ENCODE measurements at regions of chr9 and their contacts with region 1.

Region 1: DNA sequence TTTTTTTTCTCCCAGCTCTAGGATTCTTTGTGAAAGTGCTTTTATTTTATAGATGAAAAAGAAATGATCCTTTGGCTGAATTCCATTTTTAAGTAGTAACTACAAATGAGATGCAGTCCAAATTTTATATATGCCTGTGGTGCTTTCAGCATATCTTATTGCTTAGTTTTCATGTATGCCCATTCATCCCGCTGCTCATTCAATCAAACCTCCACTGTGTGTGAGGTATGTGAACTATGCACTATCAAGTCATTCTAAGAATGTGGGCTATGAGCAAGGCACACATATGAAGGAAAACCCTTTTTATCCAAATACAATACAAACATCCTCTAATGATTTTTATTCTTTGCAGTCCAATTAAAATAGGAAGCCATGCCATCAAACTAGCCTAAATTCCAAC is 1069.1 kb upstream of the DMAC1 start:
- DNase-seq: no peak
- H3K4me3 ChIP-seq: no peak overlapping the region
- H3K27ac ChIP-seq: no peak overlapping the region
- H3K4me1 ChIP-seq: peaks cover 0 to 13% (median 0%) of the 10 kb centered on the region in 4 donors
- H3K27me3 ChIP-seq: no peaks in the 10 kb centered on the region
- CTCF ChIP-seq: no peak
- EP300 ChIP-seq: no peak
- POLR2A ChIP-seq: no peak

Region 2: DNA sequence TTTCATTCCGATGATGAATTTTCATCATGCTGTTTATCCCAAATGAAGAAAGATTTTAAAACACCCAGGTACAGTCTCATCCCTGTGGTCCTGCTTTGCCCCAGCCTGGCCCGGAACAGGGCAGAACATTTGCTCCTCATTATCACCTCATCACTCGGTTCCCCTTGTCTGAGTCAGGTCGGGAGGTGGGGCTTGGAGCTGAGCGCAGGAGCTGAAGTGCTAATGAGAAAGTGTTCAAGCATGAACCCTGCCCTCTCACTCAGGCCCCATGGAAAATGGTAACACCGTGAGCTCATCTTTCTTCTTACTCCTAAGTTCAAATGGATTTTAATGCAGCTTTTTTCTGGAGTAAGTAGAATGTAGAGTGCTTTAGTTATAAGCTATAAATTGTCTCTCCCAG is 1644.7 kb before region 1 on chr9:
- in situ Hi-C with region 1: no loop called
- intact Hi-C with region 1: loop called (anchors 5 kb)
- DNase-seq: no peak
- H3K4me3 ChIP-seq: no peak overlapping the region
- H3K27ac ChIP-seq: no peak overlapping the region
- H3K4me1 ChIP-seq: no peaks in the 10 kb centered on the region
- H3K27me3 ChIP-seq: no peaks in the 10 kb centered on the region
- CTCF ChIP-seq: no peak
- EP300 ChIP-seq: no peak
- POLR2A ChIP-seq: no peak

Region 3: DNA sequence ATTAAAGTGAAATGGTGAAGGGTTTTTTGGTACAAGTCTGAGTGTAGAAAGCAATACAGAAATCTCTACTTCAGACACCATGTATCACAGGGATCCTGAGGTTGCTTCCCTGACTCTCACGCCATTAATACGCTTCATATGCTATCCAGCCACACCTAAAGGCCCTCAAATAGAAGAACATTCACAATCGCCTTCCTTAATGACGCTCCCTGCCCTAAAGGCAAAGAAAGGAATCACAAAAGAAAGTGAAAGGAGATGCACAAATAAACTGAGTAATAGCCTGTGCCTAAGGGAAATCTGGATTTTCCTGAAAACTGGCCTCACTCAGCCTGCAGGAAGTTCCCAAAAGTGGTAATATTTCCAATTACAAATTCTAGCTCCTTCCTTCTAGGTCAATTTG is 66.4 kb before region 1 on chr9:
- in situ Hi-C with region 1: no loop called
- intact Hi-C with region 1: no loop called
- DNase-seq: peak; percentile 13
- H3K4me3 ChIP-seq: no peak overlapping the region
- H3K27ac ChIP-seq: peak overlapping the region; percentile 7 to 68 (median 44)
- H3K4me1 ChIP-seq: peaks cover 0 to 40% (median 6%) of the 10 kb centered on the region in 4 donors
- H3K27me3 ChIP-seq: no peaks in the 10 kb centered on the region
- CTCF ChIP-seq: peak in 1 of 5 experiments; percentile 24
- EP300 ChIP-seq: no peak
- POLR2A ChIP-seq: no peak

Region 4: GRCh38 chr9:8850914-8851313 is 17.7 kb before region 1 on chr9:
- in situ Hi-C with region 1: no loop called
- intact Hi-C with region 1: loop called (anchors 1 kb)
- DNase-seq: no peak
- H3K4me3 ChIP-seq: no peak overlapping the region
- H3K27ac ChIP-seq: no peak overlapping the region
- H3K4me1 ChIP-seq: peaks cover 0 to 9% (median 5%) of the 10 kb centered on the region in 4 donors
- H3K27me3 ChIP-seq: peaks cover 16% of the 10 kb centered on the region
- CTCF ChIP-seq: no peak
- EP300 ChIP-seq: no peak
- POLR2A ChIP-seq: no peak

Measured in transverse colon (tissue), 4 donors.